Common myeloid progenitor, CD34-positive (primary cell): ENCODE measurements at regions of chr16 and their contacts with region 1.

Region 1: DNA sequence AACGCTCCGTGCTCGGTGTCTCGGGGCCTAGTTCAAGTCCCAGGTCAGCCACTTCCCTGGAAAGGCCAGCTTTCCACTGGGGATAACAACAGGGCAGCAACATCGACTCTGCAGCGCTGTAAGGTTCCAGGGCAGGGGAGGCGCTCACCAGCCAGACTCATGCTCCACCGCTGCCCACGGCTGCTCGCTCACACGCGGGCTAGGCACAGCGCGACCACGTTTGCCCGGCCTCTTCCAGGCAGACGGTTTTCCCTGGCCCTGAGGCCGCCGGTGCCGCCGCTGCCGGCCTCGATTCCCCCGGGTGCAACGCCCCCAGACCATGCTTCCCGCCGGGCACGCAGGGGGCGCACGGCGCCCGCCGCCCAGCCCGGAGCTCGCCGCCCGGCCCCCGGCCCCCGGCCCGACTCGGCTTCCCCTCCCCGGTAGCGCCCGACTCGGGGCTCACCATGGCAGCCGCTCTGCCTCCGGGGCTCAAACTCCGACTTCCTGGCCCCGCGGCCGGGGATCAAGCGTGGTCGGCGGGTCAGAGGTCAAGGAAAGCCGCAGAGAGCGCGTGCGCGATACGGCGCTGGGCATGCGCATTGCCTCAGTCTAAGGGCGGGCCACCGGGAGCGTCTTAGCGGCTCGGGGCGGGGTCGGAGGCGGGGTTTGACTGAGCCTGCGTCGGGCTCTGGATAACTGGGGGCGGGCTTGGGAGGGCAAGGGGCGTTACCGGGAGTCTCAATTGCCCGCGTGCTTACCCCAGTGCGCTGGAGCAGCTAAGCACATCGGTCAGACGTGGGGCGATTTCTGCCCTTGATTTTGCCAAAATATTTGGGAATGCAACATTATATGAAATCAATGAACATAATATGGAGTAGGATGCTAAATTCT is at the start of gene PAM16:
- DNase-seq: peak; percentile 93 to 96 (median 94)
- H3K4me3 ChIP-seq: peak within 1 kb of the TSS; percentile 48 to 99 (median 82)
- H3K27ac ChIP-seq: peak within 1 kb of the TSS; percentile 43 to 83
- H3K4me1 ChIP-seq: peaks cover 0 to 15% (median 11%) of the 10 kb centered on the region in 4 experiments
- H3K27me3 ChIP-seq: no peaks in the 10 kb centered on the region

Region 2: GRCh38 chr16:3789373-3790099 is 561.5 kb before region 1 on chr16:
- CTCF ChIA-PET with region 1: no interaction called
- POLR2A ChIA-PET with region 1: interaction called, 10 read pairs
- DNase-seq: peak; percentile 27 to 78 (median 77)
- H3K4me3 ChIP-seq: no peak overlapping the region
- H3K27ac ChIP-seq: no peak overlapping the region
- H3K4me1 ChIP-seq: peaks cover 9 to 26% (median 24%) of the 10 kb centered on the region in 4 experiments
- H3K27me3 ChIP-seq: no peaks in the 10 kb centered on the region

Region 3: GRCh38 chr16:4376126-4376892 is 25.3 kb after region 1 on chr16:
- CTCF ChIA-PET with region 1: no interaction called
- POLR2A ChIA-PET with region 1: no interaction called
- DNase-seq: no peak
- H3K4me3 ChIP-seq: no peak overlapping the region
- H3K27ac ChIP-seq: no peak overlapping the region
- H3K4me1 ChIP-seq: peaks cover 0 to 15% (median 12%) of the 10 kb centered on the region in 4 experiments
- H3K27me3 ChIP-seq: peaks cover 0 to 8% (median 0%) of the 10 kb centered on the region in 5 experiments

Region 4: DNA sequence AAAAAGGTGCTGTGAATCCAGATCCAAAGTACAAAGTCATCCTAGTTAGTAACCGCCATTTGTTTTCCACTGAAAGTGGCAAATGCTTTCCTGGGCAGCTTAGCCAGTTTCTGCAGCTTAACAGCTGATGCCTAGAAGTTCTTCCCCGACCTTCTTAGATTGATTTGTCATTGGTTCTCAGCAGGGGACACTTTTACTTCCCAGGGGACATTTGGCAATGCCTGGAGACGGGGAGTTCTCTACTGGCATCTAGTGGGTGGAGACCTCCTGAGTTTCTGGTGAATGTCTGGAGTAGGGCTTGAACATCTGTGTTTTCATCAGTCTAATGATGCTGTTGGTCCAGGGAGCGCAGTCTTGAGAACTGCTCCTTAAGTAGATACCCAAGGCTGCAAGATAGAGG is 82.2 kb after region 1 on chr16:
- CTCF ChIA-PET with region 1: no interaction called
- POLR2A ChIA-PET with region 1: no interaction called
- DNase-seq: no peak
- H3K4me3 ChIP-seq: no peak overlapping the region
- H3K27ac ChIP-seq: peak overlapping the region in 1 of 2 experiments; percentile 69
- H3K4me1 ChIP-seq: no peaks in the 10 kb centered on the region
- H3K27me3 ChIP-seq: no peaks in the 10 kb centered on the region